Naive thymus-derived CD4-positive, alpha-beta T cell (primary cell): ENCODE measurements at regions of chr15 and their contacts with region 1.

Region 1: GRCh38 chr15:73972984-73973682 is 19.0 kb downstream of the STOML1 start:
- DNase-seq: peak; percentile 60 to 81 (median 77)
- ATAC-seq: peak; percentile 92
- H3K4me3 ChIP-seq: peak overlapping the region; percentile 7
- H3K4me3 Mint-ChIP-seq: peak overlapping the region in 8 of 10 donors; percentile 0 to 65 (median 33)
- H3K27ac ChIP-seq: no peak overlapping the region
- H3K27ac Mint-ChIP-seq: peak overlapping the region in 2 of 9 donors; percentile 26 to 42
- H3K4me1 ChIP-seq: peaks cover 0 to 20% of the 10 kb centered on the region in 2 donors
- H3K4me1 Mint-ChIP-seq: peaks cover 11 to 44% (median 34%) of the 10 kb centered on the region in 7 donors
- H3K27me3 ChIP-seq: no peaks in the 10 kb centered on the region
- H3K27me3 Mint-ChIP-seq: peaks cover 4 to 22% (median 5%) of the 10 kb centered on the region in 5 donors

Region 2: DNA sequence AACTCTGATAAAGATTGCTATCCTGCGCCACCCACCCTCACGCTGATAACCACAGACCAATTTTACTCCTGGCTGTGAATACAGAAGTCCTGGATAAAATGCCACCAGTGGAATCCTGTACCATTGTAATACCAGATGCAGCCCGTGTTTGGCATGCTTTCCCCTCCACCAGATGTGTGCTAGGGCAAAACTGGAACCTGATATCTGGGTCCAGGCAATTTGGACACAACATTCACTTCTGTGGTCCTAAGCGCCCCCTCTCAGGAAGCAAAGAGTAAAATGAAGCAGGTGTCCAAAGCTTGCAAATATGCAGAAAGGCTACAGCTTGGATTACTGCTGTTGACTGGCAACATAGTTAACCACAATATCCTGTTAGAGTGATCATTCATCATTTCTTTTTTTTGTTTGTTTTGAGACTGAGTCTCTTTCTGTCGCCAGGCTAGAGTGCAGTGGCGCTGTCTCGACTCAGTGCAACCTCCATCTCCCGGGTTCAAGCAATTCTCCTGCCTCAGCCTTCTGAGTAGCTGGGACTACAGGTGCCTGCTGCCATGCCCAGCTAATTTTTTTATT is 14.0 kb before region 1 on chr15:
- CTCF ChIA-PET with region 1: interaction called, 29 read pairs
- POLR2A ChIA-PET with region 1: interaction called, 6 read pairs
- intact Hi-C with region 1: loop called in 1 of 2 experiments (anchors 1 kb)
- DNase-seq: peak in 7 of 9 donors; percentile 36 to 74 (median 67)
- ATAC-seq: peak; percentile 91
- H3K4me3 ChIP-seq: no peak overlapping the region
- H3K4me3 Mint-ChIP-seq: peak overlapping the region; percentile 58 to 76 (median 67)
- H3K27ac ChIP-seq: peak overlapping the region; percentile 14
- H3K27ac Mint-ChIP-seq: peak overlapping the region; percentile 78 to 97 (median 88)
- H3K4me1 ChIP-seq: peaks cover 12% of the 10 kb centered on the region in 2 donors
- H3K4me1 Mint-ChIP-seq: peaks cover 15 to 42% (median 37%) of the 10 kb centered on the region in 7 donors
- H3K27me3 ChIP-seq: no peaks in the 10 kb centered on the region
- H3K27me3 Mint-ChIP-seq: peaks cover 0 to 4% (median 0%) of the 10 kb centered on the region in 5 donors

Region 3: DNA sequence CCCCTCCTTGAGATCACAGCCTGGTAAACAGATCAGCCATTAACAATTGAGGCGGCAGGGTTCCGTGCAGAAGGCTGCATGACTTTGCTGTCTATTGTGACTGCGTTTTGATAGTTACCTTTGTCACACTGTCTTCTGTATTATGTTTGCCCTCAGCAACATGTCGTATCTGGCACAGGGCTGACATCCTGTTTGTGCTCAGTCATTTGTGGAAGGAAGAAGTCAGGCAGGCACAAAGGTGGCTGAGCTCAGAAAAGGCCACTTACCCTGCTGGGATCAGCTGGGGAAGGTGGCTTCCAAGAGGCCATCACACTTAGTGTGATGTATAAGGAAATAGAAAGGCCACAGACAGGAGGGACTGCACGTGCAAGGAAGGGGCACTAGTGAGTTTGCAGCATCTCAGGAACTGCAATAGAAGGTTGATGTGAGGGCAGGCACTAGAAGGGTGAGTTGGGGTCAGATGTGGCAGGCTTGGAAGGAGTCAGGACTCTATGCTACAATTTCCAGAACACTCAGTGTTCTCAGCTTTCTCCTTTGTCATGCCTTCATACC is 34.8 kb after region 1 on chr15:
- CTCF ChIA-PET with region 1: interaction called, 7 read pairs
- POLR2A ChIA-PET with region 1: interaction called, 6 read pairs
- intact Hi-C with region 1: loop called (anchors 5 kb)
- DNase-seq: peak in 6 of 9 donors; percentile 24 to 54 (median 44)
- ATAC-seq: peak; percentile 67
- H3K4me3 ChIP-seq: no peak overlapping the region
- H3K4me3 Mint-ChIP-seq: peak overlapping the region; percentile 58 to 88 (median 72)
- H3K27ac ChIP-seq: peak overlapping the region; percentile 56
- H3K27ac Mint-ChIP-seq: peak overlapping the region; percentile 82 to 97 (median 88)
- H3K4me1 ChIP-seq: peaks cover 11 to 35% of the 10 kb centered on the region in 2 donors
- H3K4me1 Mint-ChIP-seq: peaks cover 37 to 78% (median 73%) of the 10 kb centered on the region in 7 donors
- H3K27me3 ChIP-seq: no peaks in the 10 kb centered on the region
- H3K27me3 Mint-ChIP-seq: no peaks in the 10 kb centered on the region

Region 4: GRCh38 chr15:74044267-74045110 is 71.4 kb after region 1 on chr15:
- CTCF ChIA-PET with region 1: interaction called, 39 read pairs
- POLR2A ChIA-PET with region 1: no interaction called
- intact Hi-C with region 1: loop called (anchors 1 kb)
- DNase-seq: no peak
- ATAC-seq: no peak
- H3K4me3 ChIP-seq: no peak overlapping the region
- H3K4me3 Mint-ChIP-seq: no peak overlapping the region
- H3K27ac ChIP-seq: no peak overlapping the region
- H3K27ac Mint-ChIP-seq: no peak overlapping the region
- H3K4me1 ChIP-seq: peaks cover 8 to 14% of the 10 kb centered on the region in 2 donors
- H3K4me1 Mint-ChIP-seq: peaks cover 7 to 17% (median 11%) of the 10 kb centered on the region in 7 donors
- H3K27me3 ChIP-seq: no peaks in the 10 kb centered on the region
- H3K27me3 Mint-ChIP-seq: no peaks in the 10 kb centered on the region

Region 5: DNA sequence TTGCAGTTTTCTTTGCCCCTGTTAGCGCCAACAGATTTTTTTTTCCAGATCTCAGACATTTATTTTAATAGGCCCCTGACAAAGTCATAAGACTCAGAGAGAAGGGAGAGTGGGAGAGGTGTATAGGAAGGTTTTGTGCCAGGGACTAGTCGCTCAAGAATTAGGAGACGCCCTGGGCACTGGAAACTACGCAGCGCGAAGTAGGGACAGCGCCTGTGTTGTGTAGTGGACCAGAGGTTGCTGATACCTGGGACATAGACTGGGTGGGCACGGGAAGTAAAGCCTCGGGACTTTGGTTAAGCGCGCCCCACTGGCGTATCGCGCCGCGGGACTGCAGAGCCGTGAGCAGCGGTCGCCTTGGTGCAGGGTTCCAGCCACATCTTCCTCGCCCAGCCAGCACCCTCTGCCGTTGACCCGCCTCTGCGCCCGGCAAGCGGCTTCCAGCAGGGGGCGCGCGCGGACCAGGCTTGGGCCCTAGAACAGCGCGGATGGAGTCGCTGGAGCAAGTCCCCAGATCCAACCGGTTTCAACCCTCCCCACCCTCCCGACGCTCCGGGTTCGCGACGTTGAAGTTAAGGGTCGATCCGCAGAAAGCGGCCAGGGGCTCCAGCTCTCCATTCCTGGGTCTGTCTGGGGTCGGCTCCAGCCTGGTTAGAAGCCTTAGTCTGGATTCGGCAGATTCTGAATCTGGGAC is 154.3 kb after region 1 on chr15:
- CTCF ChIA-PET with region 1: interaction called, 3 read pairs
- POLR2A ChIA-PET with region 1: no interaction called
- intact Hi-C with region 1: loop called (anchors 2 to 5 kb)
- DNase-seq: peak; percentile 56 to 94 (median 77)
- ATAC-seq: peak; percentile 92
- H3K4me3 ChIP-seq: peak overlapping the region; percentile 9
- H3K4me3 Mint-ChIP-seq: peak overlapping the region in 9 of 10 donors; percentile 10 to 72 (median 40)
- H3K27ac ChIP-seq: no peak overlapping the region
- H3K27ac Mint-ChIP-seq: no peak overlapping the region
- H3K4me1 ChIP-seq: peaks cover 4 to 11% of the 10 kb centered on the region in 2 donors
- H3K4me1 Mint-ChIP-seq: peaks cover 12 to 30% (median 22%) of the 10 kb centered on the region in 7 donors
- H3K27me3 ChIP-seq: peaks cover 0 to 13% of the 10 kb centered on the region in 2 donors
- H3K27me3 Mint-ChIP-seq: peaks cover 56 to 82% (median 72%) of the 10 kb centered on the region in 5 donors

Region 6: DNA sequence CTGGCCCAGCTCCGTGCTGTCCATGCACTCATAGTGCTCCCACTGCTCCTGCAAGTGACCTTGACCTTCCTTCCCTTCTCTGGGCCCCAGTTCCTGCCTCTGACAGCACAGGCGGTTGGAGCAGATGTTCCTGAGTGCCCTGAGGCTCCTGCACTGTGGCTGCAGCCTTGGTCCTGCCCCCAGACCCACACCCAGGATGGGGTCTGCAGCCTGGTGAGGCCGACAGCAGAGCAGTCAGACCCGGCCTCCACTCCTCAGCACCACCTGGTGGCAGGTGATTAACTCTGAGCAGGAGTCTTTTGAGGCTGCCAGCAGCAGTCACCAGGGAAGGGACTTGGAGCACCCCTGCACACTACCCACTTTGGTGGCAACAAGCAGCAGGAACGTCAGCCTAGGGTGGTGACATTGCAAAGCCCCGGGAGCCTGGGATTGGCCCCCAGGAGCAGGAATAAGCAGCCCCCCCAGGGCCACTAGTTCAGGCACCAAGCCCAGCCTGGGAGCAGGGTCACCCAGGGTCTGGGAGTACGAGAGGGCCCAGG is 329.8 kb after region 1 on chr15:
- CTCF ChIA-PET with region 1: interaction called, 4 read pairs
- POLR2A ChIA-PET with region 1: no interaction called
- intact Hi-C with region 1: loop called in 1 of 2 experiments (anchors 1 kb)
- DNase-seq: peak in 3 of 9 donors; percentile 26 to 36 (median 29)
- ATAC-seq: no peak
- H3K4me3 ChIP-seq: no peak overlapping the region
- H3K4me3 Mint-ChIP-seq: no peak overlapping the region
- H3K27ac ChIP-seq: no peak overlapping the region
- H3K27ac Mint-ChIP-seq: no peak overlapping the region
- H3K4me1 ChIP-seq: no peaks in the 10 kb centered on the region
- H3K4me1 Mint-ChIP-seq: peaks cover 0 to 5% (median 0%) of the 10 kb centered on the region in 7 donors
- H3K27me3 ChIP-seq: no peaks in the 10 kb centered on the region
- H3K27me3 Mint-ChIP-seq: peaks cover 42 to 58% (median 50%) of the 10 kb centered on the region in 5 donors

Region 7: GRCh38 chr15:74373731-74374647 is 400.9 kb after region 1 on chr15:
- CTCF ChIA-PET with region 1: interaction called, 3 read pairs
- POLR2A ChIA-PET with region 1: no interaction called
- intact Hi-C with region 1: loop called in 1 of 2 experiments (anchors 2 kb)
- DNase-seq: peak; percentile 82 to 94 (median 91)
- ATAC-seq: peak; percentile 97
- H3K4me3 ChIP-seq: peak overlapping the region; percentile 98
- H3K4me3 Mint-ChIP-seq: peak overlapping the region; percentile 68 to 89 (median 84)
- H3K27ac ChIP-seq: peak overlapping the region; percentile 62
- H3K27ac Mint-ChIP-seq: peak overlapping the region; percentile 18 to 82 (median 40)
- H3K4me1 ChIP-seq: peaks cover 9% of the 10 kb centered on the region in 2 donors
- H3K4me1 Mint-ChIP-seq: peaks cover 0 to 32% (median 15%) of the 10 kb centered on the region in 7 donors
- H3K27me3 ChIP-seq: no peaks in the 10 kb centered on the region
- H3K27me3 Mint-ChIP-seq: peaks cover 0 to 31% (median 5%) of the 10 kb centered on the region in 5 donors